ENCODE measurements at regions of chr9 and their contacts with region 1.

Region 1: GRCh38 chr9:125143375-125144090 is at the start of gene SCAI:
- DNase-seq: peak; percentile 98
- H3K4me3 Mint-ChIP-seq: peak within 1 kb of the TSS; percentile 97
- H3K27ac Mint-ChIP-seq: peak within 1 kb of the TSS; percentile 66
- H3K4me1 Mint-ChIP-seq: peaks cover 26% of the 10 kb centered on the region
- H3K27me3 Mint-ChIP-seq: no peaks in the 10 kb centered on the region
- total RNA-seq, gene SCAI: 14.2 and 15.9 TPM in 2 replicates

Region 2: DNA sequence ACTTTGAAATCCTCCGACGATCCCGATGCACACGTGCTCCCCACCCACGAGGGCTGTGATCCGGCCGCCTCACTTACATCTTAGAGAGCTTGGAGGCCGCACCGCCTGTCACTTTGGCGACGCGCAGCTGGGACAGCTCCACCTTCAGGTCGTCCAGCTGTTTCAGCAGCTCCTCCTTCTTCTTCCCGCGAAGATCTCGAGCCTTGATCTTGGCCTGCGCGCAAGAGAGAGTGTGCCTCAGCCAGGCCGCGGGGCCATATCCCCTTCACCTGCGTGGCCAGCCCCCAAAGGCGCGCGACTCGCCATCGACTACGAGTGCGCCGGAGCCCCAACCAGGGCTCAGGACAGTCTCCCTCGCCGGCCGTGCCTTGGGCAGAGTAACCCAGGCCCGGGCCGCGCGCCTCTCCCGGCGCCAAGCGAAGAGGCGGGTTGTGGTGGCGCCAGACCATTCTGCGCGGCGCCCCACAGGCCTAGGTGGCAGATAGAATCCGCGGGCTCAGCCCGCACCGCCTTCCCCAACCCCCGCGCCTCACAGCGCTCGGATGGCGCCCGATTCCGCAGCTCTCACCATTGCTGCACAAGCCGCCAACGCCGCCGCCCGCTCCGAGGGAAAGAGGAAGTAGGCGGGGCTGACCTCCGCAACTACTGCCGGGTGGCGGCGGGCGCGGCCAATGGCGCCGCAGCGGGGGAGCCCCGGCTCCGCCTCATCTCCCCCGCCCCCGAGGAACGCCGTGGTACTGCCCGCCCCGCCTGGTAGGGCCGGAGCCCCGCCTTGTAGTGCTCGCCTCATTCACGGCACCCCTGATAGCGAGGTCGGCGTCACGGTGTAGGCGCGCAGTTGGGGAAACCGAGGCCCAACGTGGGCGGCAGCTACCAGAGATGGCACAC is 281.9 kb before region 1 on chr9 and contains the starts of genes ARPC5L and RPL35:
- intact Hi-C with region 1: loop called (anchors 5 kb)
- DNase-seq: peak; percentile 94
- H3K4me3 Mint-ChIP-seq: peak within 1 kb of the TSS; percentile 94
- H3K27ac Mint-ChIP-seq: peak within 1 kb of the TSS; percentile 98
- H3K4me1 Mint-ChIP-seq: peaks cover 19% of the 10 kb centered on the region
- H3K27me3 Mint-ChIP-seq: no peaks in the 10 kb centered on the region
- total RNA-seq, gene ARPC5L: 76.4 and 76.7 TPM in 2 replicates
- total RNA-seq, gene RPL35: 1,671 and 1,735 TPM in 2 replicates

Region 3: GRCh38 chr9:124983698-124984097 is 159.8 kb before region 1 on chr9:
- intact Hi-C with region 1: no loop called
- DNase-seq: no peak
- H3K4me3 Mint-ChIP-seq: no peak overlapping the region
- H3K27ac Mint-ChIP-seq: no peak overlapping the region
- H3K4me1 Mint-ChIP-seq: no peaks in the 10 kb centered on the region
- H3K27me3 Mint-ChIP-seq: no peaks in the 10 kb centered on the region

Region 4: GRCh38 chr9:125126019-125126746 is 17.4 kb before region 1 on chr9:
- intact Hi-C with region 1: loop called (anchors 2 kb)
- DNase-seq: peak; percentile 78
- H3K4me3 Mint-ChIP-seq: peak overlapping the region; percentile 66
- H3K27ac Mint-ChIP-seq: peak overlapping the region; percentile 98
- H3K4me1 Mint-ChIP-seq: peaks cover 24% of the 10 kb centered on the region
- H3K27me3 Mint-ChIP-seq: no peaks in the 10 kb centered on the region

Region 5: DNA sequence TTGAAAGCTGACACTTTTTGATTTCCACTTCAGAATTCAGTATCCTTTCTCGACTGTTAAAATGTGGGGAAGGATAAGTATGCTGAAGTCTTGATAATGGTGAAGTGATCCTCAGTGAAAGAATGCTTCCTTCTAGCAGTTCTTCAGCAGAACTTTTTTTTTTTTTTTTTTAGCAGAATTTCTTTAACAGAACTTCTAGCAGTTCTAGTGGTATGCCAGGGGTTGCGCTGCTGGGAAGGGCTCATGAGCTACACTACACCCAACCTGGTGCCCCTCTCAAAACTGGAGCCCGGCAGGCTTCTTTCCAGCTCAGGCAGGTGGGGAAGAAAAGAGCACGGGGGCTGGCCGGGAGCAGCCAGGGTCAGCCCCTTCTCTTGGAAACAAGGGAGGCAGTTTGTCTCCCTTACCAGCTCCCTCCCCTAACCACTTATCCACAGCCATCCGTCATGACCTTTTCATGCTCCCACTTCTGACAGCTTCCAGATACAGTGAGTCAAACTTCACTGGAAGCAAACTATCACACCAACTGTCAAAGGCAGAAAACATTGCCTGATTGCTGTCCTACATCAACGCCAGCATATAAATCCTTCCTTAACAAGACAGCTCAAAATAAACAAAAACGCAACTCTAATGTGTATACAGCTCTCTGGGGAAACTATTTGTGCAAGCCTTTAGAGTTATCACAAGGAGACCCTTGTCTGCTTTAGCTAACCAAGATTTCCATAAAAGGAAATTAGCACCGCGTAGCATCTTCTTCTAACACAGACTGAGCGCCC is 329.6 kb after region 1 on chr9:
- intact Hi-C with region 1: no loop called
- DNase-seq: no peak
- H3K4me3 Mint-ChIP-seq: no peak overlapping the region
- H3K27ac Mint-ChIP-seq: no peak overlapping the region
- H3K4me1 Mint-ChIP-seq: no peaks in the 10 kb centered on the region
- H3K27me3 Mint-ChIP-seq: no peaks in the 10 kb centered on the region

Region 6: DNA sequence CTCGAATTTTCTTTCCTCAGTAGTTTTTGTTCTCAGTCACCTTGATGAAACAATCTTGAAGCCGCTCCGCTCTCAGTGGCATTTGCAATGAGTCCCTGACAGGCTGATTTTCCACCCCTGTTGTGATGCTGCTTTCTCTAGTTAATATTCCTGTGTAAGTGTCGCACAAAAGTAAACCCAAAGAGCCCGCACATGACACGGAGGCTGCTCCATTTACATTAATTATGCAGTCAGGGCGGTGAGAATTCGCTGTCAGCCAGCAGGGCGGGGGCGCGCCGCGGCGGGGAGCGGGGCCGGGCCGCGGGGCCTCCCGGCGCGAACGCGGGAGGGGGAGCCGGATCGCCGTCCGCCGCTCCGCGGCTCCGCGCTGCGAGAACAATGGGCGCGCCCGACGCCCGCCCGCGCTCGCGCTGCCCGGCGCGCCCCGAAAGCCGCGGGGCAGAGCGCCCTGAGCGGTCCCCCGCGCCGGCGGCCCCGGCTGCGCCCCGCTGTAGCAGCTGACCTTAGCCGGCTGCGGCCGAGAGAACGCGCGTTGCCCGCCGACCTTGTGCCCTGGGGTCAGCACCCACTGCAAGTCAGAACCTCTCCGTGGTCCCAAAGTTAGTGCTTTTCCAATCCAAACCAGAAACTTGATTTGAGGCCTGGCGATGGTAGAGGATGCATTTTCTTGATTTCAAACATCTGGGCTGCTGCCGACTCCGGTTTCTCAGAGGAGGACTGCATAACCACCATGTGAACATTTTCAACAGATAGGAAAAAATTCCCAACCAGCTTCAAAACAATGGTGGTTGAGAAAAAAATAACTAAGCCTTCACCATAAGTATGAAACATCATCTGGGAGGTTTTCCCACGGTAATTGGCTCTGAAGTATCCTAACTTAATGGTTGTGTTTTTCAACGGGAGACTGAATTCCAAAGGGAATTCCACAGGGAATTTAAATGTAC is 746.2 kb after region 1 on chr9:
- intact Hi-C with region 1: no loop called
- DNase-seq: peak; percentile 11
- H3K4me3 Mint-ChIP-seq: peak overlapping the region; percentile 61
- H3K27ac Mint-ChIP-seq: no peak overlapping the region
- H3K4me1 Mint-ChIP-seq: peaks cover 6% of the 10 kb centered on the region
- H3K27me3 Mint-ChIP-seq: peaks cover 50% of the 10 kb centered on the region

Measured in activated T-helper 2 cell treated with anti-CD3 and anti-CD28 coated beads, Interferon-gamma antibody, Interleukin-2, Interleukin-4, amounts not matched to agents 10 μg/mL and 5 μg/mL and 100 μg/mL, durations not matched to agents 14 hours and 24 hours and 36 hours (primary cell).